ENCODE measurements at regions of chr1 and their contacts with region 1.

Region 1: DNA sequence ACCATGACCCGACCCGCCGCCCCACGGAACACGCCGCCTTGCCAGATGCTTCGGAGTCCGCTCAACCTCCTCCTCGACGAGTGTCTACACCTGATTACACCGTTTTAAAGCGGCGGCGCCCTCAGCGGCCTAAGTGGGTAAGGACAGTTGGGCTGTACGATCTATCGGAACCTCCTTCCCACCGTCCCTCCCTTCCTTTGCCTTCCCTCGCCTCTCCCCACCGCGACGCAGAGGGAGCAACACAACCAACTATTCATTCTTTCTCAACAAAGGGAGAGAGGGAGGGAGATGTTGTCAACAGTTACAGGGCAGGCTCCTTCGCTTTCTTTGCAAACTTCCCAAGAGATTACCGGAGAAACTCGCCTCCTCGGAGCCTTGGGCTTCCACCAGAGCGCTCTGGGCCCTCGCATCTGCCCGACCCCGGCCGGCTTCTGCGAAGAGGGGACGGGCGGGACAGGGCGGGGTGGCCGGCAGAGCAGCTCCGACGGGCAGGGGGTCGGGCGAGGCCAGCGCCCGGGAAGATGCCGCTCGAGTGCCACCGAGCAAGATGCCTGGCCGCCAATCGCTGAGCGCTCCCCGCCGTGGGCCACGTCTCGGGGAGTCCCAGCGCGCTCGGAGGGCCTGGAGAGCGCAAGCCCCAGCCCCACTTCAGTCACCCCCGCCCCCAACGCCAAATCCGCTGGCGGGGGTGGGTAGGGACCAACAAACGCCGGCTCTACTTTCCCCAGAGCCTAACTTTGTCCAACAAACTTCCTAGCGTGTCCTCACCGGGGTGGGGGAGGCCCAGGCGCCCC is 683 bp downstream of the BCAR3 start:
- DNase-seq: peak; percentile 62
- ATAC-seq: peak; percentile 72
- H3K4me3 Mint-ChIP-seq: peak overlapping the region; percentile 99
- H3K27ac Mint-ChIP-seq: peak overlapping the region; percentile 94
- H3K4me1 Mint-ChIP-seq: peaks cover 76% of the 10 kb centered on the region
- H3K27me3 Mint-ChIP-seq: no peaks in the 10 kb centered on the region
- CTCF ChIP-seq: no peak

Region 2: GRCh38 chr1:93437976-93438605 is 242.9 kb before region 1 on chr1:
- CTCF ChIA-PET with region 1: no interaction called
- POLR2A ChIA-PET with region 1: no interaction called
- intact Hi-C with region 1: loop called (anchors 2 kb)
- DNase-seq: no peak
- ATAC-seq: peak; percentile 76
- H3K4me3 Mint-ChIP-seq: no peak overlapping the region
- H3K27ac Mint-ChIP-seq: no peak overlapping the region
- H3K4me1 Mint-ChIP-seq: peaks cover 3% of the 10 kb centered on the region
- H3K27me3 Mint-ChIP-seq: peaks cover 3% of the 10 kb centered on the region
- CTCF ChIP-seq: no peak

Region 3: DNA sequence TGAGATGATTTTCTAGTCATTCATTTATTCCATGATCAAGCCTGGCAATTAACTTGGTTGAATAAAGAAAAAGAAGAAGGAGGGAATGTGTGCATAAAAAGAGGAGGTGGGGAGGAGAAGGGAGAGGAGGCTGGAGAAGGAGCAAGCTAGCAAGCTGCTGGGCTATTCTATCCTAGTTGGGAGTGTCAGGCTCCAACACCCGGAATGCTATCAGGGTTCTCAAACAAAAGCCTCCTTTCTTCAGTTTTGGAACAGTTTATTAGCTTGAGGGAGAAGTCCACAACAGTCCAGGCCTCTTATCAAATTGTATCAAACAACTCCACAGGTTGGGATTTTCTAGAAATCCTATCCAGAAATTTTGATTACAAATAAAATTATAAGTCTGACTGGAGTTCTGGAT is 79.3 kb before region 1 on chr1:
- CTCF ChIA-PET with region 1: no interaction called
- POLR2A ChIA-PET with region 1: no interaction called
- intact Hi-C with region 1: no loop called
- DNase-seq: no peak
- ATAC-seq: no peak
- H3K4me3 Mint-ChIP-seq: no peak overlapping the region
- H3K27ac Mint-ChIP-seq: no peak overlapping the region
- H3K4me1 Mint-ChIP-seq: peaks cover 12% of the 10 kb centered on the region
- H3K27me3 Mint-ChIP-seq: no peaks in the 10 kb centered on the region
- CTCF ChIP-seq: no peak

Region 4: GRCh38 chr1:93638981-93639380 is 42.0 kb before region 1 on chr1:
- CTCF ChIA-PET with region 1: interaction called, 3 read pairs
- POLR2A ChIA-PET with region 1: interaction called, 7 read pairs
- intact Hi-C with region 1: loop called (anchors 1 kb)
- DNase-seq: no peak
- ATAC-seq: no peak
- H3K4me3 Mint-ChIP-seq: no peak overlapping the region
- H3K27ac Mint-ChIP-seq: no peak overlapping the region
- H3K4me1 Mint-ChIP-seq: peaks cover 31% of the 10 kb centered on the region
- H3K27me3 Mint-ChIP-seq: no peaks in the 10 kb centered on the region
- CTCF ChIP-seq: no peak

Region 5: GRCh38 chr1:93701619-93702018 is 20.7 kb after region 1 on chr1:
- CTCF ChIA-PET with region 1: interaction called, 4 read pairs
- POLR2A ChIA-PET with region 1: interaction called, 34 read pairs
- intact Hi-C with region 1: loop called (anchors 1 kb)
- DNase-seq: no peak
- ATAC-seq: peak; percentile 47
- H3K4me3 Mint-ChIP-seq: no peak overlapping the region
- H3K27ac Mint-ChIP-seq: peak overlapping the region; percentile 46
- H3K4me1 Mint-ChIP-seq: peaks cover 69% of the 10 kb centered on the region
- H3K27me3 Mint-ChIP-seq: no peaks in the 10 kb centered on the region
- CTCF ChIP-seq: no peak

Region 6: GRCh38 chr1:93715529-93716126 is 34.7 kb after region 1 on chr1:
- CTCF ChIA-PET with region 1: interaction called, 3 read pairs
- POLR2A ChIA-PET with region 1: interaction called, 7 read pairs
- intact Hi-C with region 1: loop called (anchors 1 kb)
- DNase-seq: no peak
- ATAC-seq: peak; percentile 53
- H3K4me3 Mint-ChIP-seq: no peak overlapping the region
- H3K27ac Mint-ChIP-seq: peak overlapping the region; percentile 61
- H3K4me1 Mint-ChIP-seq: peaks cover 37% of the 10 kb centered on the region
- H3K27me3 Mint-ChIP-seq: no peaks in the 10 kb centered on the region
- CTCF ChIP-seq: no peak

Region 7: DNA sequence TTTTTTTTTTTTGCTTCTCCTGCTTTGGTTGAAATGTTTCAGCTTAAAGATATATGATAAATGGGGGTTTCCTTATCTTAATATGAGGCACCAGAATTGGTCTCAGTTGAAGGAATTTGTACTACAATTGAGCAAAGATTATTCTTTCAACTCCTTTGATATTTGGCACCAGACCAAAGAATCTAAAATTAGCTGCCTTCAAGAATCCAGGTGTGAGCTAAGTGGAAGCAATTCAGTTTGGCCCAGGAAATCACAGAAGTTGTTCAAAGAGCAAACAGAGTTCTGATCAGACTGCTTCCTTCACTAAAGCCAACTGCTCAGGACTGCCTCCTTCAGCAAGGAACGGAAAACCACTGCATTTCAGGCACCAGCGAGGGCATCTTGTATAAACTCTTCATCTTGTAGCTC is 68.9 kb after region 1 on chr1:
- CTCF ChIA-PET with region 1: interaction called, 8 read pairs
- POLR2A ChIA-PET with region 1: interaction called, 24 read pairs
- intact Hi-C with region 1: loop called (anchors 1 kb)
- DNase-seq: no peak
- ATAC-seq: peak; percentile 62
- H3K4me3 Mint-ChIP-seq: peak overlapping the region; percentile 76
- H3K27ac Mint-ChIP-seq: peak overlapping the region; percentile 94
- H3K4me1 Mint-ChIP-seq: peaks cover 60% of the 10 kb centered on the region
- H3K27me3 Mint-ChIP-seq: no peaks in the 10 kb centered on the region
- CTCF ChIP-seq: no peak

Region 8: GRCh38 chr1:94130851-94131595 is 450.1 kb after region 1 on chr1:
- CTCF ChIA-PET with region 1: no interaction called
- POLR2A ChIA-PET with region 1: no interaction called
- intact Hi-C with region 1: no loop called
- DNase-seq: no peak
- ATAC-seq: no peak
- H3K4me3 Mint-ChIP-seq: no peak overlapping the region
- H3K27ac Mint-ChIP-seq: no peak overlapping the region
- H3K4me1 Mint-ChIP-seq: no peaks in the 10 kb centered on the region
- H3K27me3 Mint-ChIP-seq: peaks cover 4% of the 10 kb centered on the region
- CTCF ChIP-seq: no peak

Region 9: GRCh38 chr1:94417978-94418663 is 737.2 kb after region 1 on chr1 and contains the start of gene ABCD3:
- CTCF ChIA-PET with region 1: no interaction called
- POLR2A ChIA-PET with region 1: no interaction called
- intact Hi-C with region 1: loop called (anchors 10 kb)
- DNase-seq: peak; percentile 97
- ATAC-seq: peak; percentile 95
- H3K4me3 Mint-ChIP-seq: no peak within 1 kb of the TSS
- H3K27ac Mint-ChIP-seq: no peak within 1 kb of the TSS
- H3K4me1 Mint-ChIP-seq: peaks cover 17% of the 10 kb centered on the region
- H3K27me3 Mint-ChIP-seq: no peaks in the 10 kb centered on the region
- CTCF ChIP-seq: no peak
- total RNA-seq, gene ABCD3: 20.8 and 23.2 TPM in 2 replicates

Measured in activated B cell treated with CpG ODN at 0.5 μM for 24 hours (primary cell).